Activated CD4-positive, alpha-beta T cell treated with anti-CD3 and anti-CD28 coated beads, Interleukin-2, amount 10 ng/mL, durations not matched to agents 24 days and 14 days (primary cell): ENCODE measurements at regions of chr3 and their contacts with region 1.

Region 1: GRCh38 chr3:171491361-171491760 is 31.2 kb upstream of the TNIK start:
- DNase-seq: peak; percentile 73
- H3K4me3 Mint-ChIP-seq: peak overlapping the region; percentile 65
- H3K27ac Mint-ChIP-seq: peak overlapping the region; percentile 80
- H3K4me1 Mint-ChIP-seq: peaks cover 50% of the 10 kb centered on the region
- H3K27me3 Mint-ChIP-seq: no peaks in the 10 kb centered on the region

Region 2: DNA sequence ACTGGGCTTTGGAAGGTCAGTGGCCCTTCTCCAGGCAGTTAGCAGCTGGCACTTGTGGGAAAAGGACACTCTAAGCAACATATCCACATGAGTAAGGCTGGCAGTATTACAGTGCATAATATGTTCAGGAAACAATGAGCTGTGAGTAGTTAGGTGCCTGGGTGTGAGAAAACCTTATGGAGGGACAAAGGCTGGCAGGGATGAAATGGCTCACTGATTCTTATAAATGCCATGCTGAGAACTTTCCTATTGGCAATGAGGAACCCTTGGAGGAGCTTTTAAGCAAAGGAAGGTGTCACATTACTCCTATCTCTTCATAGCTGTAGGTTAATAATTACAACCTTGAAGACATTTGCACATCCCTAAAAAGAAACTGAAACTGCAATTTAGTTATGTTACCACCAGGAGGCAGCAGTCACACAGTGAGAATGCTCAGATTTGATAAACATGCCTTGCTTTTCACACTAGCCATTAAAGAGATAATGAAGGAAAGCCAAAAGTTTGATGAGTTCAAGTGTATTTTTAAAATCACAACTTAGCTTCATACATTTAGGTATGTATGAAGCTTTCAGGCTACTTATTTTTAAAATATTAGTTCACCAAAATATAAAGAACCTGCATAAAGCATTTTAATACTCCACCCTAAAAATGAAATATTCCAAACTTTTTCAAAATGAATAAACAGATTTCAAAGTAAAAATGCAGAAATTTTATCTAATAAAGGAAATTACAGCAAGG is 328.2 kb before region 1 on chr3:
- intact Hi-C with region 1: loop called (anchors 5 kb)
- DNase-seq: peak; percentile 70
- H3K4me3 Mint-ChIP-seq: no peak overlapping the region
- H3K27ac Mint-ChIP-seq: no peak overlapping the region
- H3K4me1 Mint-ChIP-seq: peaks cover 18% of the 10 kb centered on the region
- H3K27me3 Mint-ChIP-seq: no peaks in the 10 kb centered on the region

Region 3: GRCh38 chr3:171248425-171249111 is 242.8 kb before region 1 on chr3:
- intact Hi-C with region 1: loop called (anchors 5 kb)
- DNase-seq: peak; percentile 60
- H3K4me3 Mint-ChIP-seq: no peak overlapping the region
- H3K27ac Mint-ChIP-seq: no peak overlapping the region
- H3K4me1 Mint-ChIP-seq: peaks cover 34% of the 10 kb centered on the region
- H3K27me3 Mint-ChIP-seq: no peaks in the 10 kb centered on the region

Region 4: DNA sequence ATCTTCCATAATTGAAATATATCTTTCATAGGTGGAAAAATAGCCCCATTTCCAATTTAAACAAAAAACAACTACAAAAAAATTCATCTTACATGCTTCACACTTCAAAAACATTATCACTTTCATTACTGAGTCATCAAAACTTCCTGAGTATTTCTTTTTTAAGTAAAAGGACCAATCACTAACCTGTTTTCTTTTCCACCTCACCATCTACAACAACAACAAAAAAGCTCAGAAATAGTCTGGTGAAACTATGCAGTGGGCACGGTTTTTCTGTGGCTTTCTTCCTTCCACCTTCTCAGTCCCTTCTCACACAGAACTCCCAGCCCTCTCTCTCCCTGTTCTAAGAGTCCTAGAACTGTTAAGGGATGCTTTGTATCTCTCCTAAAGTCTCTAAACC is 10.8 kb before region 1 on chr3:
- intact Hi-C with region 1: loop called (anchors 1 kb)
- DNase-seq: peak; percentile 80
- H3K4me3 Mint-ChIP-seq: peak overlapping the region; percentile 47
- H3K27ac Mint-ChIP-seq: peak overlapping the region; percentile 76
- H3K4me1 Mint-ChIP-seq: peaks cover 18% of the 10 kb centered on the region
- H3K27me3 Mint-ChIP-seq: no peaks in the 10 kb centered on the region

Region 5: GRCh38 chr3:171561596-171562323 is 70.4 kb after region 1 on chr3:
- intact Hi-C with region 1: loop called (anchors 5 kb)
- DNase-seq: peak; percentile 65
- H3K4me3 Mint-ChIP-seq: peak overlapping the region; percentile 77
- H3K27ac Mint-ChIP-seq: peak overlapping the region; percentile 96
- H3K4me1 Mint-ChIP-seq: peaks cover 46% of the 10 kb centered on the region
- H3K27me3 Mint-ChIP-seq: no peaks in the 10 kb centered on the region